ENCODE measurements at regions of chr2 and their contacts with region 1.

Region 1: DNA sequence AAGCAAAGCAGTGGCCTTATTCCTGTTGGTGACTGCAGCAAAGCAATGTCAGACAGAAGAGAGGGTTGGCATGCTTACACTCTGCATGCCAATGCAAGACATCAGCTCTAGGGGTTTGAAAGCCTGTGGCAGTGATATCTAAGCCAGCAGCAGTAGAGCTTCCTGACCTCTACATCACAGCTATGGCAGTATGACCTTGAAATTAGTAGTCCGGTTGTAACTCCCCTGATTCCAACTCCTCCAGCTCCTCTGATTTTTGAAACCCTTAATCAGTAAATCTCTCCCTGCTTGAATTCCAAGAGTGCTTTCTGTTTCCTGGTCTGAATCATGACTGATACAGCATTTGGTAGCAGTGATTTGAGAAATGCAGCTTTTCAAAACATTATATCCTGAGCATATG is 60.0 kb upstream of the LRP1B start:
- DNase-seq: no peak
- H3K4me3 Mint-ChIP-seq: no peak overlapping the region
- H3K27ac Mint-ChIP-seq: peak overlapping the region; percentile 37
- H3K4me1 Mint-ChIP-seq: peaks cover 16% of the 10 kb centered on the region
- H3K27me3 Mint-ChIP-seq: no peaks in the 10 kb centered on the region
- CTCF ChIP-seq: no peak

Region 2: GRCh38 chr2:140701726-140702125 is 1489.1 kb before region 1 on chr2:
- CTCF ChIA-PET with region 1: interaction called, 11 read pairs
- intact Hi-C with region 1: no loop called
- DNase-seq: no peak
- H3K4me3 Mint-ChIP-seq: no peak overlapping the region
- H3K27ac Mint-ChIP-seq: no peak overlapping the region
- H3K4me1 Mint-ChIP-seq: no peaks in the 10 kb centered on the region
- H3K27me3 Mint-ChIP-seq: no peaks in the 10 kb centered on the region
- CTCF ChIP-seq: no peak

Region 3: DNA sequence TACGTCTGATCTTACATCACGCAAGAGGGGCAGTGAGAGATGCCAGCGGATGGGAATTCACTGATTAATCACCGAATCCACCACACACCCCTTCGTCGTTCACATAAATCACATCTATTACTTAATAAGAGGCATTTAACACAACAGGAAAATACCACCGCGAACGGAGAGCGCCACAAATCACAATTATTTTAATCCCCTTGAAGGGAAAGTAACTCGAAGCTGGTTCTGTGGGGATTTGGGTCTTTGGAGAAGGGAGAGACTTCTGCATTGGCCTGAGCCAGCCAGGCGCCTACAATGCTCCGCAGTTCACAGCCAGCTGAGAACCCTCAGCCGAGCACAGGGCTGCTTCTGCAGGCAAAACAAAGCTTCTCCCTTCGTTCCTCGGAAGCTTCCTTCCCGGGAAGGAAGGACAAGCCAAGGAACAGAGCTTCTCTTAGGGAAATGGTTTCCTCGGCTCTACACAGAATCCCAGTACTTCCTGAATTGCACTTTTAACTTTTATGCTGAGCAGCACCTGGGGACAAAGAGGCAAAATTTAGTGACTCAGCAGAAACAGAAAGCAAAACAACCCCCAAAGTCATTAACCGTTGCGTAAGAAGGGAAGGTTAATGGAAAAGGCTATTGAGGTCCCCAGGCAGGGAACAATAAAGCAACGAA is 59.7 kb before region 1 on chr2 and contains the start of gene LRP1B:
- CTCF ChIA-PET with region 1: no interaction called
- intact Hi-C with region 1: no loop called
- DNase-seq: peak; percentile 18
- H3K4me3 Mint-ChIP-seq: peak within 1 kb of the TSS; percentile 87
- H3K27ac Mint-ChIP-seq: peak within 1 kb of the TSS; percentile 11
- H3K4me1 Mint-ChIP-seq: peaks cover 8% of the 10 kb centered on the region
- H3K27me3 Mint-ChIP-seq: no peaks in the 10 kb centered on the region
- CTCF ChIP-seq: no peak
- total RNA-seq, gene LRP1B: 0.05 and 0.21 TPM in 2 replicates